Common myeloid progenitor, CD34-positive (primary cell): ENCODE measurements at regions of chr14 and their contacts with region 1.

Region 1: GRCh38 chr14:64880221-64881121 is 764 bp upstream of the SPTB start:
- DNase-seq: peak; percentile 41 to 75 (median 63)
- H3K4me3 ChIP-seq: peak overlapping the region; percentile 37 to 80 (median 66)
- H3K27ac ChIP-seq: no peak overlapping the region
- H3K4me1 ChIP-seq: peaks cover 0 to 21% (median 18%) of the 10 kb centered on the region in 4 experiments
- H3K27me3 ChIP-seq: peaks cover 19 to 62% (median 31%) of the 10 kb centered on the region in 5 experiments

Region 2: DNA sequence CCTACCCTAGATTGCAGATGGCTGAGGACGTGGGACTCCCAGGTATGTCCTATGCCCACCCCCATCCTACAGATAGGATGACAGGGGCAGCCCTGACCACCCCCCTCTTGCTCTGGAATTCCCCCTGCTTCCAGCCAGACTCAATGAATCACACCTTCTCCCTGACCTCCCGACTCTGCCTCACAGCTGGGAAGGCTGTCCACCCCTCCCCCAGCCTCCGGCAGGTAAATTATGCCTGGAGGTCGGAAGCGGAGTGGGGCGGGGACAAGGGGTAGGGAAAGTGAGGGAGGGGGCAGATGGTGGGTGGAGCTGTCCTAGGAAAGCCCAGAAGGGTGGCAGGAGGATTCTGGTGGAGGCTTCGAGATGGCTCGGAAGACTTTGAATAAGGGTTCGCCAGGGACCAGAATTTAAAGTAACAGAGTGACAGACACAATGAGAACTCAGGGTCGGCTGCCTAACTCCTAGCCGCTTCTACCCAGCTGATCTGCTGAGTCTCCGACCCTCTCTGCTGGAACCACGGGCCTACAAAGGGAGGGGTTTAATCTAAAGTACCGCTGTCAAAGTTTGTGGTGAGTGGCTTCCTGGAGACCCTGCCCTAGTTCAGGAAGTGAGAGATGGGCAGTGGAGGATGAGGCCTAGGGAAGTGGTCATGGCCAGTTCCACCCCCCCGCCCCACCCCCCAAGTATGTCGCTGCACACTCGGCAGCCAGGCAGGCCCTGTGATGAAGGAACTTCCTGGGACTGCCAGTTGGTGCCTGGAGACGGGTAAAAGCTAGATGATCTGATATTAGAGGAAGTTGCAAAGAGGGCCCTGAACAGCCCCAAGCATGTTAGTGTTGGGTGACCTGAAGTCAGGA is 172.1 kb before region 1 on chr14:
- CTCF ChIA-PET with region 1: no interaction called
- POLR2A ChIA-PET with region 1: no interaction called
- DNase-seq: peak; percentile 59 to 90 (median 84)
- H3K4me3 ChIP-seq: peak overlapping the region in 4 of 7 experiments; percentile 25 to 58 (median 36)
- H3K27ac ChIP-seq: no peak overlapping the region
- H3K4me1 ChIP-seq: peaks cover 25 to 74% (median 54%) of the 10 kb centered on the region in 4 experiments
- H3K27me3 ChIP-seq: peaks cover 0 to 36% (median 9%) of the 10 kb centered on the region in 5 experiments

Region 3: DNA sequence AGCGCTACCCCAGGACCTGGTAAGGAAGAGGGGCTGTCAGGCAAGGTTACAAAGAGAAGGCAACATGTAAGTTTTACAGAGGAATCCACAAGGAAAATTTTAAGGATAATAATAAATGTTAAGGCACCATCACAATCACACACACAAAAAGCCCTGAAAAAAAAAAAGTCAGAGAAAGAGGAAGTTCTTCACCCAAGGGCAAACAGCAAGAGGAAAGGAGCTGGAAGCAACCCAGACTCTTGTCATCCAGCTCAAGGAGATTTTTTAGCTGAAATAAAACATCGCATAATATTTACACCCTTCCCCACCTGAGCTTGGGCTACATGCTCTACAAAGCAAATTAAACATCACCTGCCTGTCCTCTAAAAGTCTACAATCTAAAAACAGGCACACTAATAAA is 10.3 kb before region 1 on chr14:
- CTCF ChIA-PET with region 1: interaction called, 15 read pairs
- POLR2A ChIA-PET with region 1: interaction called, 4 read pairs
- DNase-seq: peak; percentile 41 to 79 (median 71)
- H3K4me3 ChIP-seq: peak overlapping the region in 1 of 7 experiments; percentile 6
- H3K27ac ChIP-seq: no peak overlapping the region
- H3K4me1 ChIP-seq: peaks cover 0 to 10% (median 6%) of the 10 kb centered on the region in 4 experiments
- H3K27me3 ChIP-seq: peaks cover 0 to 1% (median 0%) of the 10 kb centered on the region in 5 experiments